Dorsolateral prefrontal cortex (tissue), 120 donors: ENCODE measurements at regions of chr5 and their contacts with region 1.

Region 1: DNA sequence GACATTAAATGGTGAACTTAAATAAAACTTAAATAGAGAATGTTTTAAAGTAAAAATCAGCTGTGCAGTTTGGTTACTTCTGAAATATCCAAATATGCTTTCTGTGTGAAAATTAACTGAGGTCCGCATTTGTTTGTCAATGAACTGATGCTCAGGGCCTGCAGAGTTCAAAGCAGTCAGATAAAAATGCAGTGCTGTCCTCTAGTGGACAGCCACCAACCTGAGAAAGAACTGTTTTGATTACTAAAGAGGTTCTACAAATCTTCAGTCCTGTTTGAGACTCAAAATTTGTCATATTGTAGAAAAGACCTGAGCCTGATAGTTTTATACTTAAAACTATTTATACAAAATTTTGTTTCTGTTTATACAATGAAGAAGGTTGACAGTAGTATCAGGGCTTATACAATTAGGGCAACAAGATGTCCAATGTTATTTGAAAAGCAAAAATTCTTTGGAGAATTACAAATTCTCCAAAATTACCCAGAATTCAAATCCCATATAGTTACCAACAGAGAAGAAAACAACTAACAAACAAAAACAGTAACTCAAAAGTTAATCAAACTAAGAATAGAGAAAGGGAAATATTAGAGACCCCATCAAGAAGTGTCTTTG is 232.3 kb upstream of the TBCA start:
- DNase-seq: peak in 2 of 10 donors; percentile 63 to 67
- H3K4me3 ChIP-seq: peak overlapping the region in 11 of 59 donors; percentile 6 to 37 (median 16)
- H3K27ac ChIP-seq: peak overlapping the region in 55 of 59 donors; percentile 9 to 97 (median 87)
- H3K27me3 ChIP-seq: no peaks in the 10 kb centered on the region
- CTCF ChIP-seq: peak; percentile 69 to 99 (median 91)

Region 2: DNA sequence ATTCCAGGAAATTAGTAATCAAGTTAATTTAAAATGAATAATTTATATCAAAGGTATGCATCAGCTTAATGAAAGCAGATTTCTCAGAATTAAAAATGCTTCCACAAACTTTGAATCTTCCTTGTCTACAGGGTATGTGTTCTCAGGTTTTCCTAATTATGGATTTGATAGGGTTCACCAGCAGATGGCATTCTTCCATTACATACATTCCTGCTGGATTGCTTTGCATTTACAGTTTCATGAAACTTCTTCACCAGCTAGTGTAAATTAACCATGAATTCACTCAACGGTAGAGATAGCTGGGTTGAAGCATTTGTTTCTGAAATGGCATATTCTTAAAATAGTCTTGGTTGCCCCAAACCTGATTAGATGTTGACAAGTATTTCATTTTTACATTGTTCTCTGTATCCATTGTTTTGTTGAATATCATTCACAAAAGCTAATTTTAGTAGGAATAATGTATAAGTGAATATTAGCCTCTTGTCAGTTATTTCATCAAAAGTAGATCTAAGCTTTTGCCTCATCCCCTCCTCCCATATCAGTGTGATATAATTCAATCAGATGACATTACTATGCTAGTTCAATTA is 447.7 kb before region 1 on chr5:
- intact Hi-C with region 1: loop called in 1 of 2 experiments (anchors 5 kb)
- DNase-seq: no peak
- H3K4me3 ChIP-seq: no peak overlapping the region
- H3K27ac ChIP-seq: no peak overlapping the region
- H3K27me3 ChIP-seq: peaks cover 0 to 7% (median 0%) of the 10 kb centered on the region in 45 donors
- CTCF ChIP-seq: peak; percentile 45 to 83 (median 64)

Region 3: DNA sequence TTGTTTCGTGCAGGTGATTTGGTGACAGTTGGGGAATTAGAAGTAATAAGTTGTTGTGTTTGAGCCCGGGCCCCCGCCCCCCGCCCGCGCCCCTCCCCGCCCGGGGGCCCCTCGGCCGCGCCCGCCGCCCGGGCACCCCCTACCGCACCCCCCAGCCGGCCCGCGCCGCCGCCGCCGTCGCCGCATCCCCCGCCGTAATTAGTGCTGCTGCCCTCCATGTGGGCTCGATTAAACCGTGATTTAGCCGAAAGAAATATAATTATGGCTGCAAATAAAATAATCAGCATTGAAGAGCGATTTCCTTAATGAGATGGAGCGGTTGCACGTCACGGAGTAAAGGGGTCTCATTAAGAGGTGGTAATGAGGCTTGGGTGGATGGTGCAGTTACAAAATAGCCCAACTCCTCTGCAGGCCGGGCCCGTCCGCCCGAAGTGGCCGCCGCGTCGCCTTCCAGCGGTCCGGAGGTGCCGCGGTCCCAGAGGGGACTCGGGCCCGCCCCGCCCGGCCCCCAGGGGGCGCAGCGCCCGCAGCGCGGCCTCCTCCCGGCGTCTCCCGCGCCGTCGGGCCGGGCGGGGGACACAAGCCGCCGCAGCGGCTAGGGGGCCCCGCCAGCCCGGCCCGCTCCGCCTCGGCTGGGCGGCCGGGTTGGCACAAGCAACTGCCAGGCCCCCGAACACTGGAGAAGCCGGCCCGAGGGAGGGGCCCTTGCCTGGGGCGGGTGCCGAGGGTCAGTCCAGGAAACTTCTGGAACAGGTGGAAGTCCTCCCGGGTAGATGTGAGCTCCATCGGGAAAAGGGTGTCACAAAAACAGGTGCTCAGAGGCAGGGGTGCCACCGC is 363.1 kb before region 1 on chr5:
- intact Hi-C with region 1: loop called (anchors 10 kb)
- DNase-seq: peak in 1 of 10 donors; percentile 63
- H3K4me3 ChIP-seq: peak overlapping the region in 51 of 59 donors; percentile 10 to 66 (median 45)
- H3K27ac ChIP-seq: no peak overlapping the region
- H3K27me3 ChIP-seq: peaks cover 26 to 65% (median 52%) of the 10 kb centered on the region in 45 donors
- CTCF ChIP-seq: peak in 48 of 56 donors; percentile 13 to 77 (median 44)

Region 4: GRCh38 chr5:77718934-77719610 is 289.4 kb before region 1 on chr5:
- intact Hi-C with region 1: no loop called
- DNase-seq: no peak
- H3K4me3 ChIP-seq: no peak overlapping the region
- H3K27ac ChIP-seq: peak overlapping the region in 1 of 59 donors; percentile 12
- H3K27me3 ChIP-seq: no peaks in the 10 kb centered on the region
- CTCF ChIP-seq: no peak

Region 5: DNA sequence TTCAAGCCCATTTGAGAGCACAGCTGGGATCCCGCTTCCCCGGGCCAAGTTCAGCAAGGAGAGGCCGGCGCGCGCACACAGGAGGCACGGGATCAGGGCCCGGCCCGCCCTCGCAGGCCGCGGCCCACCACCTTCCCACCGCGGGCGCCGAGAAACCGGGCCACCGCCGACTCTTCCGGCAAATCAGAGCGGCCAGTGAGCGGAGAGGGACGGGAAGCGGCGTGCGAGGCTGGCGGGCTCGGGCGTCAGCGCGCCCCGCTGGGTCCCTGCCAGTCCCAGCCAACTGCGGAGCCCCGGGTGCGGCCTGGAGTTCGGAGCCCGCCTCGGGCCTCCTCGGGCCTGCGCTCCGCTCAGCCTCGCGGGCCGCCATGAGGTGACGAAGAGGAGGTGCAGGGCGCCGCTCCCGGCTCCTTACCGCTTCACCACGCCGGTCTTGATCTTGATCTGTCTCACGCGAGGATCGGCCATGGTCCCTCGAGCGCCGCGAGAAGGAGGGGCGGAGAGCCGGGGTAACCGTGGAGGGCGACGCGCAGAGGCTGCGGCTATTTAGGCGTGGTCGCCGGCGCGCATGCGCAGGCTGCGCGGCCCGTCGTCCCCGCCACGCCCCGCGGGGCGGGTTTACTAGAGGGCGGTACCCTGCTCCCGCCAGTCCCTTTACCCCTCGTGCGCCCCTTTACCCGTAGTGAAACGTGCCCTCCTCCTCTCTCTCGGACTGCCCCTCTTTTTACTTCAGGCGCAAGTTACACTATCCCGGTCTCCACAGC is 232.5 kb before region 1 on chr5 and contains the start of gene TBCA:
- intact Hi-C with region 1: loop called in 1 of 2 experiments (anchors 10 kb)
- DNase-seq: peak; percentile 71 to 94 (median 82)
- H3K4me3 ChIP-seq: peak within 1 kb of the TSS; percentile 60 to 97 (median 87)
- H3K27ac ChIP-seq: peak within 1 kb of the TSS; percentile 49 to 98 (median 88)
- H3K27me3 ChIP-seq: no peaks in the 10 kb centered on the region
- CTCF ChIP-seq: peak in 49 of 56 donors; percentile 8 to 68 (median 35)
- total RNA-seq, gene TBCA: 58.5 to 156 (median 103) TPM

Region 6: GRCh38 chr5:77867194-77867691 is 141.2 kb before region 1 on chr5:
- intact Hi-C with region 1: loop called (anchors 2 to 10 kb)
- DNase-seq: no peak
- H3K4me3 ChIP-seq: no peak overlapping the region
- H3K27ac ChIP-seq: peak overlapping the region in 54 of 59 donors; percentile 12 to 87 (median 70)
- H3K27me3 ChIP-seq: no peaks in the 10 kb centered on the region
- CTCF ChIP-seq: peak in 55 of 56 donors; percentile 15 to 67 (median 45)

Region 7: DNA sequence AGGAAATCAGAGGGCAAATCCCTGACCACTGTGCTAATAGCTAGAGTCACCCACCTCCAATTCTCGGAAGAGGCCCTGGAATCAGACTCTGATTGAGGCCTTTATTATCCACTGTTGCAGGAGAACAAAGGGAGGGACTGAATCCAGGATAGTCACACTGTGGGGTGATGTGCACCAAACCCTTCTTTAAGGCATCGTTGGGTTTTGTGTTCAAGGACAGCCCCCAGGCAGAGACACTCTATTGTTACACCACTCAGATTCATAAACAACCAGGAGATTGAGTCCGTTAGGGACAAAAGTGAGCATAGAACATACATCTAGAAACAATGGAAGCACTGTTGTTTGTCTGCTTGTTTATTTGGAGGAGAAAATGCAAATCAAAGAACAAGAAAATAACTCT is 107.8 kb before region 1 on chr5:
- intact Hi-C with region 1: loop called in 1 of 2 experiments (anchors 2 kb)
- DNase-seq: peak in 6 of 10 donors; percentile 9 to 74 (median 57)
- H3K4me3 ChIP-seq: no peak overlapping the region
- H3K27ac ChIP-seq: peak overlapping the region; percentile 63 to 99 (median 94)
- H3K27me3 ChIP-seq: peaks cover 0 to 3% (median 0%) of the 10 kb centered on the region in 45 donors
- CTCF ChIP-seq: peak in 6 of 56 donors; percentile 4 to 17 (median 8)

Region 8: DNA sequence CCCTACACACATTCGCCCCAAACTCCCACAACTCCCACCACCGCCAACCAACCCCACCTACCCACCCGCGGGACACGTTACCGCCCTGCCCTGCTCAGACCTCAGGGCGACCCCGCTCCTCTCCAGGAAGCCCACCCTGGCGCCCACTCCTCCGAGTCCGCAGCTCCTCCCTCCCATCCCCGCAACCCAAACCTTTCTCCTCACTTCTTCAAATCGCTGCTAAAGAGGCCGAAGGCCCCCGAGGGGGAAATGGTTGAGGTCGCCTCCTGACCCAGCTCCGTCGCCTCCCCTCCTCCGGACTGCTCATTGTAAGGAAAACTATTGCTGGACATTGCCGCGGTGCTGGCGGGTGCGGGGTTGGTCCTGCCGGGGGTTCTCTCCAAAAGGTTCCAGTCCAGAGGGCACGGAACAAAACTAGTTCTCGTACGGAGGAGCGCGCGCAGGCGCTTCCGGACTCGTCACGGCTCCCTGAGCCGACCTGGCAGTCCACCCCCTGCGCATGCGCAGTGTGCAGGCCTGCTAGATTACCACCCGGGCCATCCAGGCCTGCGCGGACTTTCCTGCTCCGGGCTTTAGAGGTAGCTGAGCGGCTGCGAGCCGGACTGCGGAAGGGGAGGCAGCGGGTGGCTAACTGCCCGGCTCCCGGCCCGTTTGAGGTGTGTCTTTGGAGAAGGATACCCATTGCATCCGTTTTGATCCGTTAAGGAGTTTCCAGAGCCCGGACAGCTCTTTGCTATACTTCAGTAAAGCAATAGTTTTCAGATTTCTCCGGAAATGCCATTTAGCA is 286.0 kb after region 1 on chr5 and contains the start of gene AP3B1:
- intact Hi-C with region 1: loop called in 1 of 2 experiments (anchors 10 kb)
- DNase-seq: peak; percentile 94 to 98 (median 97)
- H3K4me3 ChIP-seq: peak within 1 kb of the TSS; percentile 70 to 99 (median 92)
- H3K27ac ChIP-seq: peak within 1 kb of the TSS; percentile 71 to 96 (median 88)
- H3K27me3 ChIP-seq: no peaks in the 10 kb centered on the region
- CTCF ChIP-seq: peak in 35 of 56 donors; percentile 8 to 57 (median 33)
- total RNA-seq, gene AP3B1: 17.0 to 42.8 (median 27.9) TPM